Endothelial cell of umbilical vein (primary cell): ENCODE measurements at regions of chrX and their contacts with region 1.

Region 1: GRCh38 chrX:148316446-148316845 is 184.0 kb upstream of the AFF2 start:
- DNase-seq: peak; percentile 78
- H3K4me3 ChIP-seq: no peak overlapping the region
- H3K27ac ChIP-seq: peak overlapping the region; percentile 27
- H3K4me1 ChIP-seq: peaks cover 10% of the 10 kb centered on the region
- H3K27me3 ChIP-seq: no peaks in the 10 kb centered on the region
- CTCF ChIP-seq: no peak
- POLR2A ChIP-seq: no peak

Region 2: DNA sequence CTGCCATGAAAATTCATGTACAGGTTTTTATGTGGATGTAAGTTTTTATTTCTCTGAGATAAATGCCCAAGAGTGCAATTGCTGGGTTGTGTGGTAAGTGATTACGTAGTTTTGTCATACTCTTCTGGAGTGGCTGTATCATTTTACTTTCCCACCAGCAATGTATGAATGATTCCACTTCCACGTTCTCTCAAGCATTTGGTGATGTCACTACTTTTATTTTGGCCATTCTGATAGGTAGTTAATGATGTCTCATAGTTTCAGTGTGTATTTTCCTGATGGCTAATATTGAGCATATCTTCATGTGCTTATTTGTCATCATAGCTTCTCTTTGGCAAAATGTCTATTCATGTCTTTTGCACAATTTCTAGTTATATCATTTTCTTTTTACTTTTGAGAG is 207.3 kb before region 1 on chrX:
- CTCF ChIA-PET with region 1: no interaction called
- POLR2A ChIA-PET with region 1: no interaction called
- dilution Hi-C with region 1: no loop called
- intact Hi-C with region 1: no loop called
- DNase-seq: no peak
- H3K4me3 ChIP-seq: no peak overlapping the region
- H3K27ac ChIP-seq: no peak overlapping the region
- H3K4me1 ChIP-seq: no peaks in the 10 kb centered on the region
- H3K27me3 ChIP-seq: no peaks in the 10 kb centered on the region
- CTCF ChIP-seq: no peak
- POLR2A ChIP-seq: no peak

Region 3: DNA sequence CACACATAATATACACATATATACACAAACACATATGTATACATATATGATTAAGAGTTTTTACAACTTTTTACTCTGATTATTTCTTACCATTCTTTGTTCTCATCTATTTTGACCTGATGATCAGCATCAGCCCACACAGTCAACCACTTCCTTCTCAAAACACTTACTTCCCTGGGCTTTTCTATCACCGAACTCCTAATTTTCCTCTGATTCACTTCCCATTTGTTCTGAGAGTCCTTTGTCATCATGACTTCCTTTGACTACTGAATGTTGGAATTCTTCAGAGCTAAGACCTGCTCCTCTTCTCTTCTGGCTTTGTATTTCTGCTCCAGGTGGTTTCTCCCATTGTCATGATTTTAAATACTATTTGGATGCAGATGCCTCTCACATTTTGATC is 25.5 kb before region 1 on chrX:
- CTCF ChIA-PET with region 1: interaction called, 3 read pairs
- POLR2A ChIA-PET with region 1: no interaction called
- dilution Hi-C with region 1: no loop called
- intact Hi-C with region 1: loop called (anchors 1 kb)
- DNase-seq: peak; percentile 56
- H3K4me3 ChIP-seq: no peak overlapping the region
- H3K27ac ChIP-seq: peak overlapping the region; percentile 42
- H3K4me1 ChIP-seq: peaks cover 13% of the 10 kb centered on the region
- H3K27me3 ChIP-seq: no peaks in the 10 kb centered on the region
- CTCF ChIP-seq: no peak
- POLR2A ChIP-seq: no peak

Region 4: GRCh38 chrX:148298737-148299136 is 17.7 kb before region 1 on chrX:
- CTCF ChIA-PET with region 1: no interaction called
- POLR2A ChIA-PET with region 1: no interaction called
- dilution Hi-C with region 1: no loop called
- intact Hi-C with region 1: loop called (anchors 1 kb)
- DNase-seq: peak; percentile 72
- H3K4me3 ChIP-seq: no peak overlapping the region
- H3K27ac ChIP-seq: peak overlapping the region; percentile 34
- H3K4me1 ChIP-seq: peaks cover 5% of the 10 kb centered on the region
- H3K27me3 ChIP-seq: no peaks in the 10 kb centered on the region
- CTCF ChIP-seq: no peak
- POLR2A ChIP-seq: no peak